Activated CD4-positive, alpha-beta T cell treated with anti-CD3 and anti-CD28 coated beads, Interleukin-2, amount 10 ng/mL, durations not matched to agents 7 days and 5 days (primary cell): ENCODE measurements at regions of chr9 and their contacts with region 1.

Region 1: DNA sequence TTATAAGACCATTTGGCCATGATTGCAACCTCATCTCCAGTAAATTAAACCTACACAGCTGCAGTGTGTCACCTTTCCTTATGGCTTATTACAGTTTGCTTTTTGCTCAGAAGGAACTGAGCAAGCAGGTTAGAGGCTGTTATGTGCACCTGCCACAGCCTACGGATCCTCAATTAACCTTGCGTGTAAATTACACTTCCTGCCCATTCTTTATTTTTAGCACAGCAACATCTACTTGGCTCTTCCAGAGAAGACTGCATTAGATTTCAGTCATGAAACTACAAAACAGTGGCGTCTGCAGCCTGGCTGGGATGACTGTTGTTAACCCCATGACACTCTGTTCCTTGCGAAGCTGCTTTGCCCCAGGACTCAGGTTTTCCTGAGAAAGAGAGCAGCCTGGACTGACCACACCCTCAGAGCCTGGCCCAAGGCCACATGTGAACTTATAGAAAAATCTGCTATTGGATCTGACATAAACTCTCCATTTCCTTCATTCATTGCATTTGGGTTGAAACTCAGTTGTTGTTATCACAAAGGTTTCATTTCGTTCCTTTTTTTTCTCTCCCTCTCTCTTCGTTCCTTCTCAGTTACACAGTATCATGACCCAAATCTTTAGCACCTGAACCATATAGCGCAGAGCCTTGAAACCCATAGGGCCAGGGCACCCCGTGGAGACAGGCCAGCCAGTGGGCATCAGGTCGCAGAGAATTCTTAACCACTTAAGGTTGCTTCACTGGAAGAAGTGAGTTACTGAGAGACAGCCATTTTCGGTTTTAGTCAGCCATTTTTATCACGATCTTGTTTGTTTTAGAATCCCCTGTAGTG is 138.6 kb downstream of the PALM2AKAP2 start:
- DNase-seq: peak; percentile 39
- H3K4me3 Mint-ChIP-seq: peak overlapping the region; percentile 39
- H3K27ac Mint-ChIP-seq: peak overlapping the region; percentile 94
- H3K4me1 Mint-ChIP-seq: peaks cover 43% of the 10 kb centered on the region
- H3K27me3 Mint-ChIP-seq: no peaks in the 10 kb centered on the region

Region 2: DNA sequence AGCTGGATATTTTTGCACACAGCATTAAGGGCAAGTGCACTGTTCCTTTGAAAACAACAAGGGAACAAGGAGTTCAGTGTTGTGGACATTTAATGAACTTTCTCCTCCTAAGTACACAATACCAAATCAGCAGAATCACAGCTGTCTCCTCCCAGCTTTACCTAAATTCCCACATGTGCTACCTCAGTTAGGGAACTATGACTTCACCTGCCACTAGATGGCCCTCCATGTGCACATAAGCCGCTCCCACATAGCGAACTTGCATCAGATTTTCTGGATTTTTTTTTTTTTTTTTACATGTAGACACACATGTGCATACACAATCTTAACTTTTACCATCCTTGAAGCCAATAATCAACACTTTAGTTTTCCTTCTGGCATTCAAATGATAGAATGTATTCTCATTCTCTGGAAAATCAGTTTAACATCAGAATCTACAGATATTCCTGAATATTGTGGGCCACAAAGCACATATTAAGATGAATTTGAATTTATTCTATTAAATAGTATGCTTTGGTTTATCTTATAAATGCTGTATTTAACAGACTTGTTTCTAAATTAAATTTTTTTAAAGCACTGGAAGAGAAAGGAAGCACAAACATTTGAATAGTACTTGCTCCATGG is 14.9 kb before region 1 on chr9:
- CTCF ChIA-PET with region 1: interaction called, 12 read pairs
- POLR2A ChIA-PET with region 1: no interaction called
- DNase-seq: peak; percentile 80
- H3K4me3 Mint-ChIP-seq: no peak overlapping the region
- H3K27ac Mint-ChIP-seq: no peak overlapping the region
- H3K4me1 Mint-ChIP-seq: peaks cover 21% of the 10 kb centered on the region
- H3K27me3 Mint-ChIP-seq: peaks cover 3% of the 10 kb centered on the region

Region 3: GRCh38 chr9:109934857-109935215 is 16.3 kb after region 1 on chr9:
- CTCF ChIA-PET with region 1: interaction called, 13 read pairs
- POLR2A ChIA-PET with region 1: no interaction called
- DNase-seq: no peak
- H3K4me3 Mint-ChIP-seq: no peak overlapping the region
- H3K27ac Mint-ChIP-seq: peak overlapping the region; percentile 17
- H3K4me1 Mint-ChIP-seq: peaks cover 37% of the 10 kb centered on the region
- H3K27me3 Mint-ChIP-seq: no peaks in the 10 kb centered on the region

Region 4: DNA sequence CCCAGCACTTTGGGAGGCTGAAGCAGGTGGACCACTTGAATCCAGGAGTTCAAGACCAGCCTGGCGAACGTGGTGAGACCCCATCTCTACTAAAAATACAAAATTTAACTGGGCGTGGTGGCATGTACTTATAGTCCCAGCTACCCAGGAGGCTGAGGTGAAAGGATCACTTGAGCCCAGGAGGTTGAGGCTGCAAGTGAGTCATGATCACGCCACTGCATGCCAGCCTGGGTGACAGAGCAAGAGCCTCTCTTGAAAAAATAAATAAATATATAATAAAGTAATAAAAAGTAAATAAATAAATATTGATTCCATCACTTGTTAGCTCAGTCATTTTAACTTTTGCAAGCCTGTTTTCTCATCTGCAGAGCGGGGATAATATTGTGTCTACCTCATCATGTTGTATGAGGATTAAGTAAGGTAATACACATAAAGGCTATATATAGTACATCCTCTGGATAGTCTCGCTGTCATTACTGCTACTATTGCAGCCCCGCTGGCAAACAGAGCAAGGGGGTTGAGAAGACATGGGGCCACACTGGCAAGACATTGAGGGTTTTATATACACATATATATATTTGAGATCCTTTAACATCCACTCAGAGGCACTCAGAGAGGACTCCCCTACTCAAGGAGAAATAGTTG is 78.5 kb after region 1 on chr9:
- CTCF ChIA-PET with region 1: no interaction called
- POLR2A ChIA-PET with region 1: interaction called, 10 read pairs
- DNase-seq: no peak
- H3K4me3 Mint-ChIP-seq: no peak overlapping the region
- H3K27ac Mint-ChIP-seq: no peak overlapping the region
- H3K4me1 Mint-ChIP-seq: no peaks in the 10 kb centered on the region
- H3K27me3 Mint-ChIP-seq: peaks cover 15% of the 10 kb centered on the region

Region 5: GRCh38 chr9:110040788-110041187 is 122.2 kb after region 1 on chr9:
- CTCF ChIA-PET with region 1: no interaction called
- POLR2A ChIA-PET with region 1: no interaction called
- DNase-seq: no peak
- H3K4me3 Mint-ChIP-seq: no peak overlapping the region
- H3K27ac Mint-ChIP-seq: no peak overlapping the region
- H3K4me1 Mint-ChIP-seq: no peaks in the 10 kb centered on the region
- H3K27me3 Mint-ChIP-seq: peaks cover 11% of the 10 kb centered on the region